Ovary (tissue), 10 donors: ENCODE measurements at regions of chr4 and their contacts with region 1.

Region 1: DNA sequence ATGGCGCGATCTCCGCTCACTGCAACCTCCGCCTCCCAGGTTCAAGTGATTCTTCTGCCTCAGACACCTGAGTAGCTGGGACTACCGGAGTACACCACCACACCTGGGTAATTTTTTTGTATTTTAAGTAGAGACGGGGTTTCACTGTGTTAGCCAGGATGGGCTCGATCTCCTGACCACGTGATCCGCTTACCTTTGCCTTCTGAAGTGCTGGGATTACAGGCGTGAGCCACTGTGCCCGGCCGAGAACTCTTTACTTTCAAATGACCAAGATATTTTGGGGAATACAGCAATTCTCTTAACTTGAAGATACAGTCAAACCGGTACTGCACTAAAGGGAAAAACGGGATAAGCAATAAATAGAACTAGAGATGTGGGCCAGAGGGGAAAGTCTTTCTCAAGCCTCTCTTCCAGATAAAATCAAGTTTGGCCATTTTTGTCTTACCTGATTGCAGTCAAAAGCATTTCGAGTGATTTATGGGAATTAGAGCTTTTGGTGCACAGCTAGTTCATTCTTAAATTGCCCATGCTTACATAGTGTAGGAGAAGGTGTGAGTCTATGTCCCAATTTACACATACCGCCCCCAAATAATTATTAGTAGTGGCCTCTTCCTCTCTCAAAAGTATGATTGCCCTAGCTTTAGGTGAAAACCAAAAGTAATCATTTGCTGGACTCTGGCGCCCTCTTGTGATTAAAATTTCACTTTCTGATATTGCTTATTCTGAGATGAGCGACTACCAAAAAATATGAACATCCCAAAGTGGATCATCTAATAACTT is 53.2 kb upstream of the ABCG2 start:
- DNase-seq: peak in 2 of 5 donors; percentile 37 to 58
- H3K4me3 ChIP-seq: no peak overlapping the region
- H3K27ac ChIP-seq: no peak overlapping the region
- H3K4me1 ChIP-seq: no peaks in the 10 kb centered on the region
- H3K27me3 ChIP-seq: no peaks in the 10 kb centered on the region
- CTCF ChIP-seq: peak; percentile 59 to 74 (median 66)
- EP300 ChIP-seq: no peak
- POLR2A ChIP-seq: no peak

Region 2: DNA sequence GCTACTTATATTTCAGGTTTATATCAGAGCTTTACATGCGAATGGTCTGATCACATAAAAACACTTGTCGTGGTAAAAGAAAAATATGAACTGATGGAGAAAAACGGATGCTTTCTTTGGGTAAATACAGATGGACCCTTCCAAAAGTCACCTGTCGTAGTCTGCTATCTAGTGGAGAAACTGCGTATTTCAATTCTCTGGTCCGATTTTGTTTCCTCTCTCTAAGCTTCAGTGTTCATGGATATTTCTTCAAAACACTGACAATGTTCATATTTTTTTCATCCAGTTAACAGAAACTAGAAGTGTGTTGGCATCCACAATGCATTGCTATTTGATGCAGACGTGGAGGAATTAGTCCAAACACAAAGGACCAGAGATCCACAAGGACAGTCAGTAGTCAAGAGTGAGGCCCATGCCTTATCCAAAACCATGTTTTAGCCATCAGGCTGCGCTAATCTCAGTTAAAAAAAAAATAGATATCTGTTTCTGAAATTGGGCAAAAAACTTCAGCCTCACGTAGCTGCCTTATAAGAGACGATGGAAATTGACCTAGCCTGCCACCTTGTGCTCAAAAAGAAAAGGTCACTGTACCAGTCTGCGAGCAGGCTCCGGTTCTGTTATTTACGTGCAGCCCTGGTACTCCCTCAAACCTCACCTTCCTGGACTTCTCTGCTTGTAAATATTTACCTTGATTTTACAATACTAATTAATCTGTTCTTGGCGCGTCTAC is 362.9 kb before region 1 on chr4:
- intact Hi-C with region 1: loop called in 2 of 4 experiments (anchors 10 kb)
- DNase-seq: peak in 4 of 5 donors; percentile 24 to 53 (median 26)
- H3K4me3 ChIP-seq: peak overlapping the region; percentile 18
- H3K27ac ChIP-seq: no peak overlapping the region
- H3K4me1 ChIP-seq: no peaks in the 10 kb centered on the region
- H3K27me3 ChIP-seq: no peaks in the 10 kb centered on the region
- CTCF ChIP-seq: peak in 2 of 3 donors; percentile 18 to 41
- EP300 ChIP-seq: no peak
- POLR2A ChIP-seq: no peak

Region 3: GRCh38 chr4:87856816-87857215 is 354.8 kb before region 1 on chr4:
- intact Hi-C with region 1: loop called in 2 of 4 experiments (anchors 5 to 10 kb)
- DNase-seq: no peak
- H3K4me3 ChIP-seq: no peak overlapping the region
- H3K27ac ChIP-seq: no peak overlapping the region
- H3K4me1 ChIP-seq: no peaks in the 10 kb centered on the region
- H3K27me3 ChIP-seq: no peaks in the 10 kb centered on the region
- CTCF ChIP-seq: no peak
- EP300 ChIP-seq: no peak
- POLR2A ChIP-seq: no peak

Region 4: GRCh38 chr4:88033309-88033708 is 178.4 kb before region 1 on chr4:
- intact Hi-C with region 1: loop called in 3 of 4 experiments (anchors 5 to 10 kb)
- DNase-seq: peak in 1 of 5 donors; percentile 51
- H3K4me3 ChIP-seq: no peak overlapping the region
- H3K27ac ChIP-seq: no peak overlapping the region
- H3K4me1 ChIP-seq: no peaks in the 10 kb centered on the region
- H3K27me3 ChIP-seq: no peaks in the 10 kb centered on the region
- CTCF ChIP-seq: peak; percentile 33 to 57 (median 49)
- EP300 ChIP-seq: no peak
- POLR2A ChIP-seq: no peak

Region 5: GRCh38 chr4:88054901-88055300 is 156.8 kb before region 1 on chr4:
- intact Hi-C with region 1: loop called in 1 of 4 experiments (anchors 5 kb)
- DNase-seq: no peak
- H3K4me3 ChIP-seq: no peak overlapping the region
- H3K27ac ChIP-seq: no peak overlapping the region
- H3K4me1 ChIP-seq: no peaks in the 10 kb centered on the region
- H3K27me3 ChIP-seq: no peaks in the 10 kb centered on the region
- CTCF ChIP-seq: peak in 1 of 3 donors; percentile 14
- EP300 ChIP-seq: no peak
- POLR2A ChIP-seq: no peak

Region 6: DNA sequence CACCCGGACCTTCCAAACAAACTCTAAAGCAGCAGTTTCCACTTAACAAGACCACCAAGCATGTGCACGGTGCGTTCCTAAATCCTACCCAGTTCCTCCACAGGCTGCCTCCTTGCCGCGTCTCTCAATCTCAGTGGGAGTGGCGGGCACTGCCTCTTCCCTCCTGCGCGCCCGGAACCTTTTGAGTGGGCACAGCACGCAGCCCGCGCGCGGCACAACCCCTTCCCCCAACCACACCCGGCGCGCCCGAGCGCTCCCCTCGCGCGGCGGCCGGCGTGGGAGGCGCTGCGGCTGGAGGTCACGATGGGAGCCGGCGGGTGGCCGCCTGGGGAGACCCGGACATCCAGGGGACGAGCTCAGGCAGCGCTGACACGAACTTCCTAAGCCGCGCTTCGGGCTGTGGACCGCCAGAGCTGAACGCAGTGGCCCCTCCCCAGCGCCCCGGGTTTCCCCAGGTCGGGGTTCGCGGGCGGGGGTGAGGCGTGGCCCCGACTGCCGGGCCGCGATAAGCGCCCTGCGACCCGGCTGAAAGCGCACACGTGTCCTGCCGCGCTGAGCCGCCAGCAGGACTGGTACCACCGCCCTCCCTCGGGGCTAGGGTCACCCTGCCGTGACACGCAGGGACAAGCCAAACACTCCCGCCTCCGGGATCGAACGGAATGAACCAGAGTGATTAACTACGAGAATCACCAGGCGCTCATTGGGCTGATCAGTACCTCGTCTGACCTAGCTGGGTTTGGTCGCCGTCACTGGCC is 53.0 kb before region 1 on chr4 and contains the start of gene ABCG2:
- intact Hi-C with region 1: no loop called
- DNase-seq: peak in 4 of 5 donors; percentile 12 to 53 (median 31)
- H3K4me3 ChIP-seq: peak within 1 kb of the TSS; percentile 66
- H3K27ac ChIP-seq: no peak within 1 kb of the TSS
- H3K4me1 ChIP-seq: peaks cover 1% of the 10 kb centered on the region
- H3K27me3 ChIP-seq: no peaks in the 10 kb centered on the region
- CTCF ChIP-seq: no peak
- EP300 ChIP-seq: no peak
- POLR2A ChIP-seq: no peak
- total RNA-seq, gene ABCG2: 5.9 to 20.1 (median 6.7) TPM

Region 7: DNA sequence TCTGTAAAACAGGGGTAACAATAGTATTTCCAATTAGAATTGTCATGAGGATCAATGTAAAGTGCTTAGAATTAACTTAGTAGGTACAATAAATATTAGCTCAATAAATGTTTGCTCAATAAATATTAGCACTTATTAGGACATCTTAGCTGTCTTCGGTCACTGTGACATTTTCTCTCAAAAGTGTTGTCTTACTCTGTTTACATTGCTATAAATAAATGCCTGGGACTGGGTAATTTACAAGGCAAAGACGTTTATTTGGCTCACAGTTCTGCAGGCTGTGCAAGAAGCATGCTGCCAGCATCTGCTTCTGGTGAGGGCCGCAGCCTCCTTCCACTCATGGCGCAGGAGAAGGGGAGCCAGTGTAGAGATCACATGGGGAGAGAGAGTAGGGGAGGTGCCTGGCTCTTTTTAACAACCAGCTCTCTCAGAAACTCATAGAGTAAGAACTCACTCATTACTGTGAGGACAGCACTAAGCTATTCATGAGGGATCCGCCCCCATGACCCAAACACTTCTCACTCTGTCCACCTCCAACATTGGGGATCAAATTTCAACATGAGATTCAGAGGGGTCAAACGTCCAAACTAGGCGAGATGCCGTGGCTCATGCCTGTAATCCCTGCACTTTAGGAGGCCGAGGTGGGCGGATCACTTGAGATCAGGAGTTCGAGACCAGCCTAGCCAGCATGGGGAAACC is 123.5 kb after region 1 on chr4:
- intact Hi-C with region 1: no loop called
- DNase-seq: no peak
- H3K4me3 ChIP-seq: no peak overlapping the region
- H3K27ac ChIP-seq: no peak overlapping the region
- H3K4me1 ChIP-seq: peaks cover 2% of the 10 kb centered on the region
- H3K27me3 ChIP-seq: no peaks in the 10 kb centered on the region
- CTCF ChIP-seq: no peak
- EP300 ChIP-seq: no peak
- POLR2A ChIP-seq: no peak

Region 8: GRCh38 chr4:88456757-88457306 is 245.2 kb after region 1 on chr4 and contains the start of gene HERC5:
- intact Hi-C with region 1: loop called in 2 of 4 experiments (anchors 5 to 10 kb)
- DNase-seq: peak; percentile 93 to 97 (median 95)
- H3K4me3 ChIP-seq: peak within 1 kb of the TSS; percentile 92
- H3K27ac ChIP-seq: peak within 1 kb of the TSS; percentile 89 to 92
- H3K4me1 ChIP-seq: no peaks in the 10 kb centered on the region
- H3K27me3 ChIP-seq: no peaks in the 10 kb centered on the region
- CTCF ChIP-seq: peak; percentile 61 to 84 (median 83)
- EP300 ChIP-seq: peak; percentile 56
- POLR2A ChIP-seq: peak; percentile 85
- total RNA-seq, gene HERC5: 10.5 to 20.9 (median 18.6) TPM

Region 9: GRCh38 chr4:88514557-88515511 is 303.2 kb after region 1 on chr4:
- intact Hi-C with region 1: loop called (anchors 5 kb)
- DNase-seq: no peak
- H3K4me3 ChIP-seq: no peak overlapping the region
- H3K27ac ChIP-seq: no peak overlapping the region
- H3K4me1 ChIP-seq: no peaks in the 10 kb centered on the region
- H3K27me3 ChIP-seq: no peaks in the 10 kb centered on the region
- CTCF ChIP-seq: no peak
- EP300 ChIP-seq: no peak
- POLR2A ChIP-seq: no peak